PC-3 (cell line): ENCODE measurements at regions of chr3 and their contacts with region 1.

Region 1: DNA sequence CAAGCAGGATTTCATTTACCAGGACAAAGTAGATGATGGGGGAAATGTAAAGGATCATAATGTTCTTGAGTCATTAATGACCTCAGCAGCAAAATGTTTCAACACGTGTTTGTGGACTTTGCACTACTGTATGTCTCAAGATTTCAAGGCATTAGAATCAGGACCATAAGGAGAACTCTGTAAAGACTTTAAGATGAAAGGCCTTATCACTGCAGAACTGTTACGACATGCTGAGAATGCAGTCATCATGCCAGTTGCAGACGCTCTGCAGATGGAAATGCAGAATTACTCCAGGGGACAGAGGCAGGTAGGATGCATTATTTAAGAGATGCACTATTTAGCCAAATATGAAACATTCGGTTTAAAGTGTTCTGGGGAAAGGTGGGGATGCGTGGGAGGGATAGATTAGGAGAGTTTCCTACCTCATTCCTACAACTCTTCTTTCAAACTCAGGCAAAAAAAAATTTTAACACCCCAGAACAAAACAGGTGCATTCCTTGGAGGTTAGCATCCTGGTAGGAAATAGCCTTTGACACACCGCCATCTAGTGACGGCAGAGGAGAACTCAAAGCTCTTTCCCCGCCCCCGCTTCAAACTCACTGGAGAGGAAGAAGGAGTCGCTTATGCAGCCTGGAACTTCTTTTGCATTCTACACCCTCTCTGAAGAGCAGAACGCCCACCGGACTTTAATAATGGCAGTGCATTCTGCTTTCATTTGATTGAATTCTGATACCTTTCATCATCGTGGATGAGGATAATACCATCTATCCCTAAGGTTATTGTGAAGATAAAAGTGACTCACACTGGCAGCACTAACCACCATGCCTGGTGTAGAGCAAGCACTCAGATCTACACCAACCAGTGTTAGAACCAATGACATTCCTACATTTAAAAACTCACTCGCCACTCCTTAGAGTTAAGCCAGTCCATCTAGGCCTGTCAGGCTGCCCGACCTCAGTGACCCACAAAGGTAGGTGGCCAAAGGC is 43.1 kb upstream of the TOPAZ1 start:
- DNase-seq: peak; percentile 91
- ATAC-seq: peak; percentile 94
- H3K4me3 ChIP-seq: no peak overlapping the region
- H3K27ac ChIP-seq: no peak overlapping the region
- H3K4me1 ChIP-seq: peaks cover 7% of the 10 kb centered on the region; the same call in 1 of the 2 replicates
- H3K27me3 ChIP-seq: no peaks in the 10 kb centered on the region
- CTCF ChIP-seq: peak; percentile 90

Region 2: GRCh38 chr3:43699864-43700263 is 498.7 kb before region 1 on chr3:
- CTCF ChIA-PET with region 1: no interaction called
- POLR2A ChIA-PET with region 1: no interaction called
- intact Hi-C with region 1: loop called (anchors 1 kb)
- DNase-seq: peak; percentile 63
- ATAC-seq: peak; percentile 80
- H3K4me3 ChIP-seq: no peak overlapping the region
- H3K27ac ChIP-seq: no peak overlapping the region
- H3K4me1 ChIP-seq: no peaks in the 10 kb centered on the region
- H3K27me3 ChIP-seq: no peaks in the 10 kb centered on the region
- CTCF ChIP-seq: peak; percentile 74

Region 3: DNA sequence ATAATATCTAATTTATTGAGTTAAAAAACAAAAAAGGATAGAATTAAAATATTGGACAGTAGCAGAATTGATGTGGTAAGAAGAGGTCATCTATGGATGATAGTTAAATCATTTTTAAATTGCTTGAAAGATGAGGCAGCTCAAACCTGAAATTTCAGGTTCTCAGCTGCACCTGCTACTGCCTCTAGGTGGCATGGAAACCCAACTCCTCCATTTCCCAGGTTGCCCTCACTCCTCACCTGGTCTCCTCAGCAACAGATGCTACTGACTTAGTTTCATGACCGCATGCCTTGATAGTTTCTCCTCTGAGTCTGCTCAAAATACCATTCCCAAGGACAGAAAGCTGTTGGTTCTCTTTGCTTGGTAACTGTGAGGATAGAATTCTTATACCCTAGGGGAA is 359.7 kb before region 1 on chr3:
- CTCF ChIA-PET with region 1: interaction called, 3 read pairs
- POLR2A ChIA-PET with region 1: no interaction called
- intact Hi-C with region 1: loop called (anchors 5 kb)
- DNase-seq: peak; percentile 41
- ATAC-seq: no peak; the same call in 1 of the 2 replicates
- H3K4me3 ChIP-seq: no peak overlapping the region
- H3K27ac ChIP-seq: no peak overlapping the region
- H3K4me1 ChIP-seq: no peaks in the 10 kb centered on the region
- H3K27me3 ChIP-seq: no peaks in the 10 kb centered on the region
- CTCF ChIP-seq: peak; percentile 64

Region 4: GRCh38 chr3:43879166-43879565 is 319.4 kb before region 1 on chr3:
- CTCF ChIA-PET with region 1: no interaction called
- POLR2A ChIA-PET with region 1: no interaction called
- intact Hi-C with region 1: loop called (anchors 1 kb)
- DNase-seq: peak; percentile 66
- ATAC-seq: peak; percentile 68
- H3K4me3 ChIP-seq: no peak overlapping the region
- H3K27ac ChIP-seq: no peak overlapping the region
- H3K4me1 ChIP-seq: peaks cover 20% of the 10 kb centered on the region
- H3K27me3 ChIP-seq: no peaks in the 10 kb centered on the region
- CTCF ChIP-seq: peak; percentile 69